Activated CD4-positive, alpha-beta T cell treated with anti-CD3 and anti-CD28 coated beads, Interleukin-2, amount 10 ng/mL, durations not matched to agents 24 days and 14 days (primary cell): ENCODE measurements at regions of chr19 and their contacts with region 1.

Region 1: DNA sequence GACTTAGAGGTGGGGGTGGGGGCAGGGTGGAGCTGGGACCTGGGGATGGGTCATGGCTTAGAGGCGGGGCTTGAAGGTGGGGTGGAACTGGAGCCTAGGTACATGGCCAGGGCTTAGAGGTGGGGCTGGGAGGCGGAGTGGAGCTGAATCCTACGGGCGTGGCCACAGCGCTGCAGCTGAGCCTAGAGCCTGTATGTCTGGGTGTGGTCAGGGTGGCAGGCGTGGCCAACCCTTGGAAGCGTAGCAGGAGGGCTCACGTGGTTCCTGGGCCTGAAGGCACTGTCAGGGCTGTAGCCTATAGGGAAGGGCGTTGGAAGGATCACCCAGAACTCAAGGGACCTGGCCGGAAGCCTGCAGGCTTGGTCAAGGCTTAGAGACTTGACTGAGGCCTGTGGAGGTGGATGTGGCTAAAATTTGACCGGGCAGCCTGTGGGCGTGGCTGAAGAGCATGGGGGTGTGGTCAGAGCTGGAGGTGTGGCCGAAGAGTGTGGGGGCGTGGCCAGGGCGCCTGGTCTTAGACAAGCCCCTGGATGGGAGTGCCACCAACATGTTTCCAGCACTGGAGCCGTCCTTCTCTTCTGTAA is 24.3 kb downstream of the COLGALT1 start:
- DNase-seq: peak; percentile 74
- H3K4me3 Mint-ChIP-seq: no peak overlapping the region
- H3K27ac Mint-ChIP-seq: no peak overlapping the region
- H3K4me1 Mint-ChIP-seq: peaks cover 3% of the 10 kb centered on the region
- H3K27me3 Mint-ChIP-seq: no peaks in the 10 kb centered on the region

Region 2: DNA sequence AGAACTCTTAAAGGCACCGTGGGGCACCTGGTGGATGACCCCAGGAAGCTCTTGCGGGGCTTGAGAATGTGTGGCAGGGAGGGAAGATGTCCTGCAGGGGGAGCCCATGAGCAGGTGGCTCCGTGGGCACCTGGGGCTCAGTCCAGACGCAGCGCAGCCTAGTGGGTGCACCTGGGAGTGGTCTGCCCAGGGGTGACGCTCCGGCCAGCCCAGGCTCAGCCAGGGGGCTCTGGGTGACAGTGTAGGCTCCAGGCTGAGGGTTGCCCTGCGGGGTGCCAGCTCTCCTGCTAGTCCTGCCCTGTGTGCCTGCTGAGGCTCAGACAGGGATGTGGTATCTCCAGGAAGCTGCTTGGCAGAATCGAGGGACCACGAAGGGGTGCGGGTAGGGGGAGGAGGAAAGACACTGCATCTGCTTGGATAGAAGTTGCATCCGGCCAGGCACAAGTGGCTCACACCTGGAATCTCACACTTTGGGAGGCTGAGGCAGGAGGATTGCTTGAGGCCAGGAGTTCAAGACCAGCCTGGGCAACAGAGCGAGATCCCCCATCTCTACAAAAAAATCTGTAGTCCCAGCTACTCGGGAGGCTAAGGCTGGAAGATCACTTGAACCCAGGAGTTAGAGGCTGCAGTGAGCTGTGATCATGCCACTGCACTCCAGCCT is 83.3 kb before region 1 on chr19:
- intact Hi-C with region 1: loop called (anchors 10 kb)
- DNase-seq: peak; percentile 94
- H3K4me3 Mint-ChIP-seq: peak overlapping the region; percentile 35
- H3K27ac Mint-ChIP-seq: no peak overlapping the region
- H3K4me1 Mint-ChIP-seq: peaks cover 14% of the 10 kb centered on the region
- H3K27me3 Mint-ChIP-seq: no peaks in the 10 kb centered on the region

Region 3: DNA sequence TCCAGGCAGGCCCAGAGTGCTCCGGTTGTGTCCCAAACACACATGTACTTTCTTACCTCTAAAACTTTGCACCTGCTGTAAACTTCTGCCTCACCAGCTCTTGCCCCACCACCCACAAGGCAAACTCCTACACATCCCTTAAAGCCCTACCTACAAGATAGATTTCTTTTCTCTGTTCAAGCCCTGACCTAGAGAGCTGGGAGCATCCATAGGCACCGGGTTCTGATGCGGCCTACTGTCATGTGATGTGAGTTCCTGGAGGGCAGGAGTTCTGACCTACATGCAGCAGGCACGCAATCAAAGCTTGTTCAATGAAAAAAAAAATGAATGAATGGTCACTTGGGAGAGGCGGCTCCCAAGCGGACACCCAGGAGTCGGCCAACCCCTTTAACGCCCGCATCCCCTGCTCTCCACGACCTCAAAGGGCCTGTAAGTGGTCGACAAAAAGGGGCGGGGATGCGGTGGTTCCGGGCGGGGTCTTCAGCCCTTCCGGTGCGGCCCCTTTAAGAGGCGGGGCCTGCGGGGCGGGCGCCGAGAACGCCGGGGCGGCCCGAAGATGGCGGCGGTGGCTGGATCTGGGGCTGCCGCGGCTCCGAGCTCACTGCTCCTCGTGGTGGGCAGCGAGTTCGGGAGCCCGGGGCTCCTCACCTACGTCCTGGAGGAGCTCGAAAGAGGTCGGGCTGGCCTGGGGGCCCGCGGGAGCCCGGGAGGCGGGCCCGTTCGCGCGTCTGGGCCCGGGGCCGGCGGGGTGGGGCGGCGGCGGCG is 139.4 kb after region 1 on chr19 and contains the start of gene MAP1S:
- intact Hi-C with region 1: no loop called
- DNase-seq: peak; percentile 93
- H3K4me3 Mint-ChIP-seq: peak within 1 kb of the TSS; percentile 91
- H3K27ac Mint-ChIP-seq: peak within 1 kb of the TSS; percentile 85
- H3K4me1 Mint-ChIP-seq: peaks cover 34% of the 10 kb centered on the region
- H3K27me3 Mint-ChIP-seq: no peaks in the 10 kb centered on the region
- total RNA-seq, gene MAP1S: 69.0 and 70.3 TPM in 2 replicates